Heart right ventricle (tissue), 16 donors: ENCODE measurements at regions of chr3 and their contacts with region 1.

Region 1: GRCh38 chr3:153161138-153161713 is 800 bp upstream of the RAP2B start:
- DNase-seq: peak; percentile 86 to 97
- ATAC-seq: peak; percentile 87 to 97 (median 94)
- H3K4me3 ChIP-seq: peak overlapping the region; percentile 68 to 96 (median 82)
- H3K27ac ChIP-seq: peak overlapping the region; percentile 82 to 96 (median 92)
- H3K4me1 ChIP-seq: peaks cover 0 to 32% (median 26%) of the 10 kb centered on the region in 9 donors
- H3K27me3 ChIP-seq: no peaks in the 10 kb centered on the region
- CTCF ChIP-seq: no peak

Region 2: DNA sequence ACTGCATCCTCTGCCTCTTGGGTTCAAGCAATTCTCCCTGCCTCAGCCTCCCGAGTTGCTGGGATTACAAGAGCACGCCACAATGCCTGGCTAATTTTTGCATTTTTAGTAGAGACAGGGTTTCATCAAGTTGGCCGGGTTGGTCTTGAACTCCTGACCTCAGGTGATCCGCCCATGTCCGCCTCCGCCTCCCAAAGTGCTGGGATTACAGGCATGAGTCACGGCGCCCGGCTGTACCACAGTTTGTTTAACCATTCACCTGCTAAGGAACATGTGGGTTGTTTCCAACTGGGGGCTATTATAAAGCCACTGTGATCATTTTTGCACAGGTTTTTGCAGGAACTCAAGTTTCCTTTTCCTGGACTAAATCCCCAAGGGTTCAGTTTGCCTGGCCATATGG is 122.4 kb before region 1 on chr3:
- intact Hi-C with region 1: loop called in 6 of 10 experiments (anchors 5 to 10 kb)
- DNase-seq: no peak
- ATAC-seq: peak in 2 of 8 donors; percentile 73 to 75
- H3K4me3 ChIP-seq: no peak overlapping the region
- H3K27ac ChIP-seq: peak overlapping the region in 3 of 10 donors; percentile 11 to 27 (median 23)
- H3K4me1 ChIP-seq: peaks cover 0 to 13% (median 5%) of the 10 kb centered on the region in 9 donors
- H3K27me3 ChIP-seq: no peaks in the 10 kb centered on the region
- CTCF ChIP-seq: no peak

Region 3: GRCh38 chr3:153221748-153222162 is 60.5 kb after region 1 on chr3:
- intact Hi-C with region 1: loop called in 1 of 10 experiments (anchors 5 kb)
- DNase-seq: peak; percentile 27 to 79
- ATAC-seq: peak; percentile 90 to 100 (median 98)
- H3K4me3 ChIP-seq: peak overlapping the region in 3 of 10 donors; percentile 3 to 17 (median 17)
- H3K27ac ChIP-seq: peak overlapping the region; percentile 35 to 87 (median 66)
- H3K4me1 ChIP-seq: peaks cover 0 to 47% (median 17%) of the 10 kb centered on the region in 9 donors
- H3K27me3 ChIP-seq: no peaks in the 10 kb centered on the region
- CTCF ChIP-seq: no peak

Region 4: GRCh38 chr3:153291056-153291685 is 129.9 kb after region 1 on chr3:
- intact Hi-C with region 1: loop called in 8 of 10 experiments (anchors 5 to 10 kb)
- DNase-seq: no peak
- ATAC-seq: peak in 2 of 8 donors; percentile 61 to 79
- H3K4me3 ChIP-seq: no peak overlapping the region
- H3K27ac ChIP-seq: peak overlapping the region in 1 of 10 donors; percentile 7
- H3K4me1 ChIP-seq: peaks cover 0 to 44% (median 2%) of the 10 kb centered on the region in 9 donors
- H3K27me3 ChIP-seq: no peaks in the 10 kb centered on the region
- CTCF ChIP-seq: peak in 8 of 9 donors; percentile 7 to 62 (median 44)

Region 5: GRCh38 chr3:153372326-153372725 is 211.1 kb after region 1 on chr3:
- intact Hi-C with region 1: no loop called
- DNase-seq: no peak
- ATAC-seq: peak in 1 of 8 donors; percentile 42
- H3K4me3 ChIP-seq: no peak overlapping the region
- H3K27ac ChIP-seq: no peak overlapping the region
- H3K4me1 ChIP-seq: peaks cover 0 to 15% (median 0%) of the 10 kb centered on the region in 9 donors
- H3K27me3 ChIP-seq: no peaks in the 10 kb centered on the region
- CTCF ChIP-seq: no peak

Region 6: DNA sequence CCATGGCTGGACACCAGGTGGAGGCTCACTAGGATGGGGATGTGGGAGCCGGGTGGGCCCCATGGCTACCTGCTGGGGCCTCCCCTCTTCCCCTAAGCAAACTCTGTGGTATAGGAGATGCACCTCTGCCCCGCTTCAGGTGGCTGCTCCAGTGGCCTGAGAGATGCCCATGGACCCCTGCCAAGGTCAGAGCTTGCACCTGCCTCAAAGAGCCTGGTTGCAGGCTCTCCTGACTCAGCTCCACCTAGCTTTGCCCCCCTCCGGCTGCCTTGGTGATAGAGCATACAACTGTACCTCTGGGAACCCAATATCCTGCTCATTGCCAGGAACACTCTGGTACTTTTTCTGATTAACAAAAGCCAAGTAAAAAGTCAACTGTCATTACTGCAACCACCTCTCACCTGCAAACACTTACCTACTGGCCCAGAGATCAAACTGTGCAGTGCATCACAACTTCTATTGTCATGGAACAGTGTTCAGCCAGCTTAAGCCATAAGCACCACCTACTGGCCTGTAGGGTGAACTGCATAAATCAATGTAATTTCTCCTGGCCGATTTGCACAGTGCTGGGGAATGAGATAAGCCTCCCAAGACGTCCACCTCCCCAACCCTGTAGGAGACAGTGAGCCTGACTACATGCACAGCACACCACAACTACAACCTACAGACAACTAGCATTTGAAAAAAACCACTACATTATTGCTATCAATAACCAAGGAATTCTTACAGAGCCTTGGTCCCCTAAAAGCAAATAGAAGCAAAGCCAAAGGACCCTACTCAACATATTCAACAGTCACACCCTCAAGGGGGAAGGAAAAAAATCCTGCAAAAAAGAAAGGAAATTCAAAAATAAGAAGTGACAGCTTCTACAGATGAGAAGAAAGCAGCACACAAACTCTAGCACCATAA is 607.6 kb after region 1 on chr3:
- intact Hi-C with region 1: loop called in 1 of 10 experiments (anchors 10 kb)
- DNase-seq: peak in 1 of 2 donors; percentile 22
- ATAC-seq: peak; percentile 57 to 89 (median 81)
- H3K4me3 ChIP-seq: no peak overlapping the region
- H3K27ac ChIP-seq: no peak overlapping the region
- H3K4me1 ChIP-seq: no peaks in the 10 kb centered on the region
- H3K27me3 ChIP-seq: no peaks in the 10 kb centered on the region
- CTCF ChIP-seq: peak; percentile 66 to 85 (median 79)

Region 7: DNA sequence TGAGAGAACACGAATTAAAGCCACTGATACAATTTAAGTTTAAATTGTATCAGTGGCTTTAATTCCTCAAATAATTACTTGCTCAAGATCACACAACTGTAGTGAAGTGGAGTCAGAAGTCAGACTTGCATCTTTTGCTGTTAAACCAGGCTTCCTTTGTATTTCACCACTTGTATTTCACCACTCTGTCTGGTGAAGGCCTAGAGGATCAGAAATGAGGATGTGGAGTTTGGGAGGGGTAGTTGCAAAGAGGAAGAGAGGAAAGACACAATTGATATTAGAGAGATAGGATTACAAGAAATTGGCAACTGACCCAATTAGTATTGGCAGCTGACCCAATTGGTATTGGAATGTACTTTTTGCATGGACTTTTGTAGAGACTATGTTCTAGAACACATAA is 1556.8 kb after region 1 on chr3:
- intact Hi-C with region 1: no loop called
- DNase-seq: no peak
- ATAC-seq: no peak
- H3K4me3 ChIP-seq: no peak overlapping the region
- H3K27ac ChIP-seq: no peak overlapping the region
- H3K4me1 ChIP-seq: no peaks in the 10 kb centered on the region
- H3K27me3 ChIP-seq: no peaks in the 10 kb centered on the region
- CTCF ChIP-seq: no peak